HCT116 (cell line): ENCODE measurements at regions of chr18 and their contacts with region 1.

Region 1: DNA sequence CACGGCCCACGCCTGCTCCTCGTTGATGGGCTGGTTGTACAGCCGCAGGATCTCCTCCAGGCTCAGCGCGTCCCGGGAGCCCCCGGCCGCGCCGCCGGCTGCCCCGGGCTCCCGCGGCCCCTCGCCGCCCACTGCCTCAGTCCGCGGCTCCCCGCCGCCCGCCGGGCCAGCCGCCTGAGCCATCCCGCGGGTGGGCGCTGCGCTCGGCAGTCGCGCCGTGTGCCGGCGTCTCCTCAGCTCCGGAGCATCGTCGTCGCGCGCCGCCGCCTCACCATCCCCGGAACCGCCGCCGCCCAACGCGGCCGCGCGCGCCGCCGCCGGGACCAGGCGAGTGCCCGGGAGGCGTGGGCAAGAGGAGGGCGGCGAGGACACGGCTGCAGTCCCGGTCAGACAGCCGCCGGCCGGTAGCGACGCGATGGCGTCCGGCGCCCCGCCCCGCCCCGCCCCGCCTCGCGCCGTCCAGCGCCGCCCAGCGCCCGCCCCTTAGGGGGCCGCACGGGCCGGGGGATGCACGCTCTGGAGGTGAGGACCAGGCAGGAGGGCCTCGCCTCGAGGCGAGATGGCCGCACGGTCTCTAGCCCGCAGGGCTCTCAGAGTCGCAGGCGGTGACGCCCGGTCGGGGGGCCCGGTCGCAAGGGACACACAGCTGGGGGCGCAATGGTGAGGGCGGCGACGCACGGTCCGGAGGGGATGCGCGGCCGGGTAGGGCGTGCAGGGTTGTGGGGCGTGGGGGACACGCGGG is at the start of gene SPIRE1:
- DNase-seq: no peak
- ATAC-seq: peak; percentile 87
- H3K4me3 ChIP-seq: peak within 1 kb of the TSS; percentile 62 to 79
- H3K27ac ChIP-seq: peak within 1 kb of the TSS; percentile 75
- H3K4me1 ChIP-seq: peaks cover 10 to 35% of the 10 kb centered on the region in 2 experiments
- H3K27me3 ChIP-seq: no peaks in the 10 kb centered on the region
- CTCF ChIP-seq: no peak
- POLR2A ChIP-seq: peak; percentile 47
- RAD21 ChIP-seq: no peak
- total RNA-seq, gene SPIRE1: 26.6 TPM

Region 2: DNA sequence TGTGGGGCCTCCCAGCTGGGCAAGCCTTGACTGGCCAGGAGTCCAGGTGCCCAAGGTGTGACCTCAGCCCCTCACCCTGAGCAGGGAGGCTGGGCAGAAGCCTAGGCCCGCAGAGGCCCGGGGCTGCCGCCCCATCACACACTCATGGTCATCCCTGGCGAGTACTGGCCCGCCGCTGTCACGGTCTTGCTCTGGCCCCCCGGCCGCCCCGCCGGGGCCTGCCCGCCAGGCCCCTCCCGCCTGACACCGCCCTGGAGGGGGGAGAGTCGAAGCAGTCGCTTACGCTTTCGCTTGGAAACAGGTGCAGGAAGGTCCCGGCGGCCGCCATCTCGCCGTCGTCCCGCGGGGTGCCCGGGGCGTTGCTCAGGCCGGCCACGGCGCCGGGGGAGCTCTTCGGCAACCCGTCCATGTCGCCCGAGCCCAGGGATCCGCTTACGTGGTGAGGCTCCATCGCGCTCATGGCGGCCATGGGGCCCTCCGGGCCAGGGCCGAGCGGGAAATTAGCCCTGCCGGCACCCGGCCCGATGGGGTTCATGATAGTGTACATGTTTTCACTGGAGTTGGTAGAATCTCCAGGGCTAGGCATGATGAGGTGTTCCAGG is 590.8 kb before region 1 on chr18:
- CTCF ChIA-PET with region 1: no interaction called
- POLR2A ChIA-PET with region 1: no interaction called
- RAD21 ChIA-PET with region 1: no interaction called
- intact Hi-C with region 1: no loop called
- DNase-seq: no peak
- ATAC-seq: no peak
- H3K4me3 ChIP-seq: no peak overlapping the region
- H3K27ac ChIP-seq: no peak overlapping the region
- H3K4me1 ChIP-seq: peaks cover 0 to 3% of the 10 kb centered on the region in 2 experiments; a peak in 1 of 4 replicates
- H3K27me3 ChIP-seq: no peaks in the 10 kb centered on the region
- CTCF ChIP-seq: no peak
- POLR2A ChIP-seq: no peak
- RAD21 ChIP-seq: no peak

Region 3: GRCh38 chr18:12278741-12279682 is 378.8 kb before region 1 on chr18:
- CTCF ChIA-PET with region 1: interaction called, 3 read pairs
- POLR2A ChIA-PET with region 1: no interaction called
- RAD21 ChIA-PET with region 1: no interaction called
- intact Hi-C with region 1: loop called (anchors 5 kb)
- DNase-seq: no peak
- ATAC-seq: no peak
- H3K4me3 ChIP-seq: no peak overlapping the region
- H3K27ac ChIP-seq: no peak overlapping the region
- H3K4me1 ChIP-seq: peaks cover 9 to 28% of the 10 kb centered on the region in 2 experiments; a peak in 3 of 4 replicates
- H3K27me3 ChIP-seq: no peaks in the 10 kb centered on the region
- CTCF ChIP-seq: no peak
- POLR2A ChIP-seq: no peak
- RAD21 ChIP-seq: no peak

Region 4: DNA sequence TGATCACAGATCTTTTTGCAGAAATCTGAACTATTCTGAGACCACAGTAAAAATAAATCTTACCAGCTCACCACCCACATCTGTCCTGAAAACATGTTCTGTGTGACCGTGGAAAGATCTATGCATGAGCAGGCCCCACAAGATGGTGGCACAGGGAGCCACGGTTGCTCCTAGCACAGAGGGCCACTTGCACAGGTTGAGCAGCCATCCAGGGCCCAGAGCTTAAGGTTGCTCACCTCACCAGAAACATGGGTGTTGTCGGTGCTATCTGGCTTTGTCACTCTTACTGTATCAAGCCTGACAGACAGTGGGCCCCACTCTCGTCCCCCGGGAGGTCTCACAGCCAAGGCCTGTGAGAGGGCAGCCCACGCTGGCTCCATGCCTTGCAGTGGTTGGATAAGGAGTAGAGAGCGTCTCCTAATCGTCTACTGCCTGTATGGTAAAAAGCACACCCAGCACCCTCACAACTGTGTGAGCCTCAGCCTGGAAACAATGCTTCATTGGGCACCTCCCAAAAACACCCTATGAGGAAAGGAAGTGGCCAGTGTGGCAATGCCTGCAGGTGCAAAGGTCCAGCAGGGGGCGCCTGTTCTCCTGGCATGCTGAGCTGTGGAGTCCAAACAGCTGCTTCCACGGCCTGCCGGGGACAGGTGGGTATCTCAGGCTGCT is 330.2 kb before region 1 on chr18:
- CTCF ChIA-PET with region 1: interaction called, 3 read pairs
- POLR2A ChIA-PET with region 1: no interaction called
- RAD21 ChIA-PET with region 1: no interaction called
- intact Hi-C with region 1: loop called (anchors 5 kb)
- DNase-seq: peak; percentile 52
- ATAC-seq: peak; percentile 97
- H3K4me3 ChIP-seq: no peak overlapping the region
- H3K27ac ChIP-seq: no peak overlapping the region
- H3K4me1 ChIP-seq: peaks cover 0 to 7% of the 10 kb centered on the region in 2 experiments; a peak in 1 of 4 replicates
- H3K27me3 ChIP-seq: no peaks in the 10 kb centered on the region
- CTCF ChIP-seq: peak; percentile 62 to 98 (median 97); a peak in 5 of 6 replicates
- POLR2A ChIP-seq: no peak
- RAD21 ChIP-seq: peak; percentile 47; the same call in 1 of the 2 replicates

Region 5: DNA sequence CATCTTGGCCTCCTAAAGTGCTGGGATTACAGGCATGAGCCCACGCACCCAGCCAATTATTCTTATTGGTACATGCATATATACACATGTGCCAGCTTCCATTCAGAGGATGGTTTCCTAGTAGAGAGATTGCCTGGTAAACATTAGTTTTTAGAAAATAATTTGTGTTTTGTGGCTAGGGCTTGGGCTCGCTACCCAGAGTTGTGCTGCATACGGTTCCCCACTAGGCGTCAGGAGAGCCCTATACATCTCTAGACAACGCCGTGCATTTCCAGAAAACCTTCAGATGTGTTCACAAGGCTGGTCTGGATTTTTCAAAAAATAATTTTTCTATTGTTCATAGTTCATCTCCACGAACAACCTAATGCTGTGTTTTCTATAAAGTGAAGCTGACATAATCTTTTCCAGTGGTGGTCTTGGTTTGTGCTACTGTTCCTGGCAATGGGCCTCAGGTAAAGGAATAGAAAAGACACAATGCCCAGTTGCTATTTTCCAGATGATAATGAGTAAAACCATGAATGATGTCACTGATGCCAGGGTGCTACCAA is 266.2 kb before region 1 on chr18:
- CTCF ChIA-PET with region 1: interaction called, 26 read pairs
- POLR2A ChIA-PET with region 1: interaction called, 3 read pairs
- RAD21 ChIA-PET with region 1: interaction called in 1 of 2 experiments, 4 read pairs
- intact Hi-C with region 1: loop called (anchors 1 kb)
- DNase-seq: peak; percentile 52
- ATAC-seq: peak; percentile 69
- H3K4me3 ChIP-seq: no peak overlapping the region
- H3K27ac ChIP-seq: no peak overlapping the region
- H3K4me1 ChIP-seq: peaks cover 10 to 25% of the 10 kb centered on the region in 2 experiments; a peak in 3 of 4 replicates
- H3K27me3 ChIP-seq: no peaks in the 10 kb centered on the region
- CTCF ChIP-seq: peak; percentile 87 to 95 (median 92)
- POLR2A ChIP-seq: no peak
- RAD21 ChIP-seq: peak; percentile 95

Region 6: DNA sequence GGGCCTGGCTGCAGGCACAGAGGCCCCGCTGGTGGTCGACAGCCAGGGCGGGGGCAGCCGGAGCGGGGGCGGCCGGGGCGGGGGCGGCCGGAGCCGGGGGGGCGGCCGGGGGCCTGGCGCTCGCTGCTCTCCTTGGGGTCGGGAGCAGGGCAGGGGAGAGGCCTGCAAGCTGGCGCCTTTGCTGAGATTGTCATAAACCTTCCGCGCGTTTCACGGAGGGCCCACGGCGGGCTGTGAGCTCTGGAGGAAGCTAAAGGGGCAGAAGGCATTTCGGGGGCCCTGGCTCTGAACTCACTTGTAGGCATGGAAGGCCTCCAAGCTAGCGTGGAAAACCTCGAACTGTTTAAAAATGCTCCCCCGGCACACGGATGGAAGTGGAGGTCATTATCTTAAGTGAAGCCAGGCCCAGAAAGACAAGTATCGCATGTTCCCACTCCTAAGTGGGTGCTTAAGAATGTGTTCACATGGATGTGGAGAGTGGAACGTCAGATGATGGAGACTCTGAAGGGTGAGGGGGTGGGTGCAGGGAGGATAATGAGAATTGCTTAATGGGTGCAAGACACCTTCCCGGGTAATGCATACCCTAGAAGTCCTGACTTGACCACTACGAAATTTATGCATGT is 249.5 kb before region 1 on chr18:
- CTCF ChIA-PET with region 1: no interaction called
- POLR2A ChIA-PET with region 1: no interaction called
- RAD21 ChIA-PET with region 1: no interaction called
- intact Hi-C with region 1: loop called (anchors 1 kb)
- DNase-seq: no peak
- ATAC-seq: no peak; the same call in none of the 2 replicates
- H3K4me3 ChIP-seq: peak overlapping the region; percentile 54 to 83
- H3K27ac ChIP-seq: peak overlapping the region; percentile 77
- H3K4me1 ChIP-seq: peaks cover 17 to 37% of the 10 kb centered on the region in 2 experiments
- H3K27me3 ChIP-seq: peaks cover 17% of the 10 kb centered on the region; the same call in 1 of the 2 replicates
- CTCF ChIP-seq: no peak
- POLR2A ChIP-seq: no peak
- RAD21 ChIP-seq: no peak

Region 7: DNA sequence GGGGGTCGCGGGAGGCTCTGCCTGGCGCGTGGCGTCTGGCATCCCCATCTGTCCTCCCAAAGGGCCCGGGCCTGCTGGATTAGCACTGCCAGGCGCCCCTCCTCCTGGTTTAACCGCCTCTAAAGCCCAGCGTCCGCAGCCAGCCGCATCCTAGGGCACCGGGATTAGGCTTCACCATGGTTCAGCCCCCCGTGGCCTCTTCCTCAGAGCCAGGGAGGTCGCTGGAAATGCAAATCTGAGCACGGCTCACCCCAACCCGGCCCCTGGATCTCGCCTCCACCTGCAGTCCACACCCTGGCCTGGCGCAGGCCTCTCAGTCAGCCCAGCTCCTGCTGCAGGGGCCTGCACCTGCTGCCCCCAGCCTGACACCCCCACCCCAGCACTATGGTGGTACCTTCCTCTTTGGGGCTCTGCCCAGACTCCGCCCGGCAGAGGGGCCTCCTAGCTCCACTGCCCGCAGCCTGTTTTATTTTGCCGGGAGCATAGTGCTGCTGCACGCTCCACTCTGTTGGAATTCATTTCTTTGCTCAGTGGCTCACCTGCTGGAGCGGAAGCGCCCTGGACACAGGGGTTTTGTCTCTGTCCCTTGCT is 236.9 kb before region 1 on chr18:
- CTCF ChIA-PET with region 1: interaction called, 7 read pairs
- POLR2A ChIA-PET with region 1: no interaction called
- RAD21 ChIA-PET with region 1: no interaction called
- intact Hi-C with region 1: loop called (anchors 2 kb)
- DNase-seq: no peak
- ATAC-seq: no peak
- H3K4me3 ChIP-seq: no peak overlapping the region
- H3K27ac ChIP-seq: no peak overlapping the region
- H3K4me1 ChIP-seq: peaks cover 4 to 9% of the 10 kb centered on the region in 2 experiments; a peak in 2 of 4 replicates
- H3K27me3 ChIP-seq: no peaks in the 10 kb centered on the region
- CTCF ChIP-seq: no peak
- POLR2A ChIP-seq: no peak
- RAD21 ChIP-seq: no peak

Region 8: GRCh38 chr18:12540751-12541150 is 117.1 kb before region 1 on chr18:
- CTCF ChIA-PET with region 1: no interaction called
- POLR2A ChIA-PET with region 1: no interaction called
- RAD21 ChIA-PET with region 1: no interaction called
- intact Hi-C with region 1: loop called (anchors 2 kb)
- DNase-seq: no peak
- ATAC-seq: no peak
- H3K4me3 ChIP-seq: no peak overlapping the region
- H3K27ac ChIP-seq: no peak overlapping the region
- H3K4me1 ChIP-seq: no peaks in the 10 kb centered on the region
- H3K27me3 ChIP-seq: no peaks in the 10 kb centered on the region
- CTCF ChIP-seq: no peak
- POLR2A ChIP-seq: no peak
- RAD21 ChIP-seq: no peak